ENCODE measurements at regions of chr2 and their contacts with region 1.

Region 1: GRCh38 chr2:28958689-28959088 is 22.4 kb upstream of the TOGARAM2 start:
- DNase-seq: peak; percentile 42 to 67 (median 54)
- ATAC-seq: peak; percentile 82
- H3K4me3 ChIP-seq: no peak overlapping the region
- H3K27ac ChIP-seq: no peak overlapping the region
- H3K4me1 ChIP-seq: peaks cover 0 to 5% of the 10 kb centered on the region in 2 experiments; a peak in 3 of 5 replicates
- H3K27me3 ChIP-seq: peaks cover 18 to 26% of the 10 kb centered on the region in 2 experiments; a peak in 4 of 5 replicates
- CTCF ChIP-seq: peak; percentile 60 to 84 (median 69)
- EP300 ChIP-seq: no peak
- POLR2A ChIP-seq: no peak
- RAD21 ChIP-seq: peak; percentile 88 to 91

Region 2: GRCh38 chr2:28594289-28595108 is 364.2 kb before region 1 on chr2:
- CTCF ChIA-PET with region 1: no interaction called
- POLR2A ChIA-PET with region 1: interaction called, 3 read pairs
- in situ Hi-C with region 1: no loop called
- intact Hi-C with region 1: loop called (anchors 10 kb)
- DNase-seq: peak; percentile 82 to 91 (median 84)
- ATAC-seq: peak; percentile 94
- H3K4me3 ChIP-seq: no peak overlapping the region
- H3K27ac ChIP-seq: no peak overlapping the region
- H3K4me1 ChIP-seq: peaks cover 5 to 8% of the 10 kb centered on the region in 2 experiments; a peak in 2 of 5 replicates
- H3K27me3 ChIP-seq: peaks cover 0 to 28% of the 10 kb centered on the region in 2 experiments; a peak in 3 of 5 replicates
- CTCF ChIP-seq: peak; percentile 90 to 95 (median 91)
- EP300 ChIP-seq: no peak
- POLR2A ChIP-seq: no peak
- RAD21 ChIP-seq: peak; percentile 77 to 91

Region 3: GRCh38 chr2:28702415-28702861 is 256.3 kb before region 1 on chr2:
- CTCF ChIA-PET with region 1: no interaction called
- POLR2A ChIA-PET with region 1: no interaction called
- in situ Hi-C with region 1: no loop called
- intact Hi-C with region 1: no loop called
- DNase-seq: no peak
- ATAC-seq: no peak
- H3K4me3 ChIP-seq: no peak overlapping the region
- H3K27ac ChIP-seq: no peak overlapping the region
- H3K4me1 ChIP-seq: no peaks in the 10 kb centered on the region; a peak in 1 of 5 replicates
- H3K27me3 ChIP-seq: no peaks in the 10 kb centered on the region; a peak in 1 of 5 replicates
- CTCF ChIP-seq: no peak
- EP300 ChIP-seq: no peak
- POLR2A ChIP-seq: no peak
- RAD21 ChIP-seq: no peak

Region 4: DNA sequence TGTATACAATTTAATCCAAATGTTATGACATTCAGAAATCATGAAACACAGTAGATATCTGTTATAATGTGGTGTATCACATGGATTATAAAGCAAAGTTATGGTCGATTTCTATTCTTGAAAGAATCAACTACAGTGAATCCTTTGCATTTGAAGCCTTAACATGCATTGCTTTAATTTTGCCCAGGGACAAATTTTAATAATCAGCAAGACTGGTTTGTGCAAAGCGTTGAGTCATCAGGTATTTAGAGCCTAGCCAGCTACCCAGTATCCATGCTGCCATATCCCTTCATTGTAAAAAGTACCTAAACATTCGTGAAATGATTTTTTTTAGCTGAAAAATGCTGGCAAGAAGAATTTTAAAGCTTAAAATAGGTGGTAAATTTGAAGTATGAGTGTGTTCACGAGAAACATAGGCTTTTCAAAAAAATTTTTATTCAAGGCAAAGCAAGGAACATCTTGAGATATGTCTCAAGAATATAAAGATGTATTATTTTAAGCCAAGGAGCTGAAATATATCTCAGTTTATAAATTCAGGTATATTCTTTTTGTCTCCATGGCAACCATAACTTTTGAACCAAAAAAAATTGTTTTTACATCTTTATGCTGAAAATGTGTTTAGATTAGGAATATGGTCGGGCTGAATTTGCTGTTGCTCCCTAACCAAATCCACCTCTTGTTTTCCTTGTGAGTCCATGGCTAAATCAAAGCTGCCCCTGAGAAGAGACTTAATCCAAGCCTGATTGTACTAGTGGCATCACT is 156.8 kb before region 1 on chr2:
- CTCF ChIA-PET with region 1: no interaction called
- POLR2A ChIA-PET with region 1: no interaction called
- in situ Hi-C with region 1: no loop called
- intact Hi-C with region 1: no loop called
- DNase-seq: no peak
- ATAC-seq: no peak
- H3K4me3 ChIP-seq: no peak overlapping the region
- H3K27ac ChIP-seq: no peak overlapping the region
- H3K4me1 ChIP-seq: no peaks in the 10 kb centered on the region
- H3K27me3 ChIP-seq: no peaks in the 10 kb centered on the region
- CTCF ChIP-seq: no peak
- EP300 ChIP-seq: no peak
- POLR2A ChIP-seq: no peak
- RAD21 ChIP-seq: no peak

Region 5: GRCh38 chr2:29014811-29015421 is 56.2 kb after region 1 on chr2:
- CTCF ChIA-PET with region 1: interaction called, 5 read pairs
- POLR2A ChIA-PET with region 1: no interaction called
- in situ Hi-C with region 1: no loop called
- intact Hi-C with region 1: loop called (anchors 5 kb)
- DNase-seq: peak in 2 of 4 experiments; percentile 9 to 28
- ATAC-seq: peak; percentile 66
- H3K4me3 ChIP-seq: no peak overlapping the region
- H3K27ac ChIP-seq: no peak overlapping the region
- H3K4me1 ChIP-seq: peaks cover 0 to 3% of the 10 kb centered on the region in 2 experiments; a peak in 2 of 5 replicates
- H3K27me3 ChIP-seq: peaks cover 39 to 90% of the 10 kb centered on the region in 2 experiments
- CTCF ChIP-seq: 0 out of 6 replicates have a peak, but pooled peaks of 1 of the 3 experiments have one; percentile 12
- EP300 ChIP-seq: no peak
- POLR2A ChIP-seq: no peak
- RAD21 ChIP-seq: no peak

Region 6: DNA sequence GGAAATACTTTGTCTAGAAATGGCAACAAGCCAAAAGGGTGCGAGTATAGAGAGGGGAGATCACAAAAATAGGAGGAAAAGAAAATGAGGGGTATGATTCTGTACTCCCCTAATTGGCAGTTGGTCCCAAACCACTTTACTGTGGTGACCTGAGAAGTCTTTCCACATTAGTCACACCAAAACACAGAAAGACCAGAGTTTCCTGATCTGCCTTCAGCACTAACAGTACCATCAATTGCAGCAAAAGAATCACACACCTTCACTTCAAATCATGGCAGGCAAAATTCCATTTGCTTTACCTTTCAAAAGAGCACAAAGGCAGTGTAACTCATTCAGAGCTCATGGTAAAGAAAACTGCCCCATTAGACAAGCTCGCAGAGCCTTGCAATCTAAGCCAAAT is 875.9 kb after region 1 on chr2:
- CTCF ChIA-PET with region 1: no interaction called
- POLR2A ChIA-PET with region 1: no interaction called
- in situ Hi-C with region 1: no loop called
- intact Hi-C with region 1: loop called (anchors 5 kb)
- DNase-seq: no peak
- ATAC-seq: no peak
- H3K4me3 ChIP-seq: no peak overlapping the region
- H3K27ac ChIP-seq: no peak overlapping the region
- H3K4me1 ChIP-seq: no peaks in the 10 kb centered on the region
- H3K27me3 ChIP-seq: no peaks in the 10 kb centered on the region
- CTCF ChIP-seq: no peak
- EP300 ChIP-seq: no peak
- POLR2A ChIP-seq: no peak
- RAD21 ChIP-seq: no peak

Measured in K562 (cell line).